ENCODE measurements at regions of chr13 and their contacts with region 1.

Region 1: GRCh38 chr13:99307648-99308339 is 595 bp upstream of the GPR183 start:
- DNase-seq: peak in 2 of 9 donors; percentile 44 to 69
- ATAC-seq: peak; percentile 40
- H3K4me3 ChIP-seq: peak overlapping the region; percentile 89
- H3K4me3 Mint-ChIP-seq: peak overlapping the region; percentile 89 to 100 (median 94)
- H3K27ac ChIP-seq: peak overlapping the region; percentile 88
- H3K27ac Mint-ChIP-seq: peak overlapping the region; percentile 81 to 99 (median 95)
- H3K4me1 ChIP-seq: peaks cover 49 to 50% of the 10 kb centered on the region in 2 donors
- H3K4me1 Mint-ChIP-seq: peaks cover 56 to 84% (median 77%) of the 10 kb centered on the region in 7 donors
- H3K27me3 ChIP-seq: no peaks in the 10 kb centered on the region
- H3K27me3 Mint-ChIP-seq: no peaks in the 10 kb centered on the region

Region 2: GRCh38 chr13:99281811-99282263 is 26.0 kb before region 1 on chr13:
- CTCF ChIA-PET with region 1: interaction called, 4 read pairs
- POLR2A ChIA-PET with region 1: interaction called, 208 read pairs
- intact Hi-C with region 1: loop called in 1 of 2 experiments (anchors 1 kb)
- DNase-seq: peak in 7 of 9 donors; percentile 45 to 65 (median 55)
- ATAC-seq: peak; percentile 85
- H3K4me3 ChIP-seq: peak overlapping the region; percentile 10
- H3K4me3 Mint-ChIP-seq: peak overlapping the region; percentile 36 to 85 (median 72)
- H3K27ac ChIP-seq: peak overlapping the region; percentile 73
- H3K27ac Mint-ChIP-seq: peak overlapping the region; percentile 86 to 99 (median 97)
- H3K4me1 ChIP-seq: peaks cover 83 to 87% of the 10 kb centered on the region in 2 donors
- H3K4me1 Mint-ChIP-seq: peaks cover 64 to 99% (median 94%) of the 10 kb centered on the region in 7 donors
- H3K27me3 ChIP-seq: no peaks in the 10 kb centered on the region
- H3K27me3 Mint-ChIP-seq: no peaks in the 10 kb centered on the region

Region 3: GRCh38 chr13:99296398-99296797 is 11.4 kb before region 1 on chr13:
- CTCF ChIA-PET with region 1: interaction called, 3 read pairs
- POLR2A ChIA-PET with region 1: interaction called, 39 read pairs
- intact Hi-C with region 1: loop called (anchors 1 kb)
- DNase-seq: peak in 6 of 9 donors; percentile 49 to 69 (median 57)
- ATAC-seq: peak; percentile 59
- H3K4me3 ChIP-seq: peak overlapping the region; percentile 28
- H3K4me3 Mint-ChIP-seq: peak overlapping the region; percentile 73 to 91 (median 82)
- H3K27ac ChIP-seq: peak overlapping the region; percentile 73
- H3K27ac Mint-ChIP-seq: peak overlapping the region; percentile 89 to 98 (median 93)
- H3K4me1 ChIP-seq: peaks cover 78 to 81% of the 10 kb centered on the region in 2 donors
- H3K4me1 Mint-ChIP-seq: peaks cover 60 to 94% (median 88%) of the 10 kb centered on the region in 7 donors
- H3K27me3 ChIP-seq: no peaks in the 10 kb centered on the region
- H3K27me3 Mint-ChIP-seq: no peaks in the 10 kb centered on the region

Region 4: GRCh38 chr13:99331881-99332293 is 24.1 kb after region 1 on chr13:
- CTCF ChIA-PET with region 1: interaction called, 3 read pairs
- POLR2A ChIA-PET with region 1: interaction called, 14 read pairs
- intact Hi-C with region 1: loop called in 1 of 2 experiments (anchors 5 kb)
- DNase-seq: no peak
- ATAC-seq: no peak
- H3K4me3 ChIP-seq: no peak overlapping the region
- H3K4me3 Mint-ChIP-seq: no peak overlapping the region
- H3K27ac ChIP-seq: no peak overlapping the region
- H3K27ac Mint-ChIP-seq: peak overlapping the region in 2 of 9 donors; percentile 28
- H3K4me1 ChIP-seq: peaks cover 4 to 11% of the 10 kb centered on the region in 2 donors
- H3K4me1 Mint-ChIP-seq: peaks cover 24 to 77% (median 73%) of the 10 kb centered on the region in 7 donors
- H3K27me3 ChIP-seq: no peaks in the 10 kb centered on the region
- H3K27me3 Mint-ChIP-seq: no peaks in the 10 kb centered on the region

Region 5: DNA sequence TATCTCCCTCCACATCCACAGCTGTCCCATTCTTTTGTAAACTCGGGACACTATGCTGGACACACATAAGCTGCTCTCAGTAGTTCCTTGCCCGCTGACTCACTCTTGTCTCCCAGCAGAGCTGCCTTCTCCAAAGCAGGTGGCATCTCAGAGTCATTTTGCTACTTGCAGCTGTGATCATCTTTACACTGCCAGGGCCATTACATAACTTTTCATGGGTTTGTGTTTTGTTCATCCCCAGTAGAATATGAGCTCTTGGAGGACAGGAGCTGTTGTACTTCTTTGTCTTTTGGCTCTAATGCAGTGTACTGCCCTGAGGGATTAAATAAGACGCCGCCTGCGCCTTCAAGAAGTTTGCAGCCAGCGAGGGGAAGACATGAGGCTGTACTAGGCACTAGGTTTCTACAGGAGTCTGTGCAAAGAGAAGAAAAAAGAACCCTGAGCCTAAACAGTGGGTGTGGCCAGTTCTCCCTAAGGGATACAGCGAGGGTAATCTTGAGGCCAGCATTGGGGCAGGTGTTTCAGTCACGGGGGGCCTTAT is 40.2 kb after region 1 on chr13:
- CTCF ChIA-PET with region 1: interaction called, 39 read pairs
- POLR2A ChIA-PET with region 1: interaction called, 205 read pairs
- intact Hi-C with region 1: loop called in 1 of 2 experiments (anchors 1 kb)
- DNase-seq: no peak
- ATAC-seq: no peak
- H3K4me3 ChIP-seq: no peak overlapping the region
- H3K4me3 Mint-ChIP-seq: peak overlapping the region in 2 of 10 donors; percentile 17 to 48
- H3K27ac ChIP-seq: peak overlapping the region; percentile 41
- H3K27ac Mint-ChIP-seq: peak overlapping the region; percentile 30 to 99 (median 96)
- H3K4me1 ChIP-seq: peaks cover 30 to 36% of the 10 kb centered on the region in 2 donors
- H3K4me1 Mint-ChIP-seq: peaks cover 42 to 98% (median 89%) of the 10 kb centered on the region in 7 donors
- H3K27me3 ChIP-seq: no peaks in the 10 kb centered on the region
- H3K27me3 Mint-ChIP-seq: no peaks in the 10 kb centered on the region

Region 6: DNA sequence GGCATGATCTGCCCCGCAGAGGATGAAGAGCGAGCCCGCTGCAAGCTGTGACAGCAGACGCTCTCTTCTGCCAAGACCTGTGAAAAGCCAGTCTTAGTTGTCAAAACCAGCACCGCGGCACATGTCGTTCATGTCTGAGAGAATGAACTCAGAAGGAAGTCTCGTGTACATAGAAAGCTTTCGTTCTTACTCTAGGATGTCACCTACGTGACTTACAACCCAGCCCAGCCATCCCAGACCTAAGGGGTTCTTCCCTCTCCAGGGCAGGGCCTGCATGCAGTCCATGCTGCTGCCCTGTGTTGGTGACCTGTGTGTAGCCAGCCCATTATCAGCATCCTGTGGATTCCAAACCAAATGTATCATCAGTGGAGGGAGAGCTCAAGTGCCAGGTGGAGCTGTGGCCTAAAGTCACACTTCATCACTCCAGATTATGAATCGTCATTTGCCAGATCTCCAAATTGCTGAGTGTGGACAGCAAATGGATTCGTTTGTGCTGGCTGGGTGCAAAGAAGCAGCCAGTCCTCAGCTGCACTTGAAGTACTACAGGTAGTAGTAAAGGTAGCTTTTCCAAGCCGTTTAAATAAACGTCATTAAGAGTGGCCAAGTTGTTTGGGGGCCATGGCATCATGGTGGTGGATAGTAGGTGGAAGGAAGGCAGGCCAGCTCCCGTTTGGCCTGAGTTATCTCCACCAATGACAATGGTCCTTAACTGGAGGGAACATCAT is 73.3 kb after region 1 on chr13:
- CTCF ChIA-PET with region 1: interaction called, 20 read pairs
- POLR2A ChIA-PET with region 1: interaction called, 364 read pairs
- intact Hi-C with region 1: loop called in 1 of 2 experiments (anchors 5 kb)
- DNase-seq: peak in 8 of 9 donors; percentile 55 to 73 (median 62)
- ATAC-seq: peak; percentile 51
- H3K4me3 ChIP-seq: peak overlapping the region; percentile 1
- H3K4me3 Mint-ChIP-seq: peak overlapping the region; percentile 63 to 85 (median 76)
- H3K27ac ChIP-seq: peak overlapping the region; percentile 85
- H3K27ac Mint-ChIP-seq: peak overlapping the region; percentile 94 to 99 (median 98)
- H3K4me1 ChIP-seq: peaks cover 77 to 88% of the 10 kb centered on the region in 2 donors
- H3K4me1 Mint-ChIP-seq: peaks cover 48 to 100% (median 98%) of the 10 kb centered on the region in 7 donors
- H3K27me3 ChIP-seq: no peaks in the 10 kb centered on the region
- H3K27me3 Mint-ChIP-seq: no peaks in the 10 kb centered on the region

Region 7: GRCh38 chr13:99417201-99418102 is 109.7 kb after region 1 on chr13:
- CTCF ChIA-PET with region 1: interaction called, 4 read pairs
- POLR2A ChIA-PET with region 1: interaction called, 15 read pairs
- intact Hi-C with region 1: no loop called
- DNase-seq: peak in 7 of 9 donors; percentile 58 to 78 (median 77)
- ATAC-seq: peak; percentile 40
- H3K4me3 ChIP-seq: peak overlapping the region; percentile 65
- H3K4me3 Mint-ChIP-seq: peak overlapping the region in 1 of 10 donors; percentile 50
- H3K27ac ChIP-seq: peak overlapping the region; percentile 91
- H3K27ac Mint-ChIP-seq: peak overlapping the region in 1 of 9 donors; percentile 26
- H3K4me1 ChIP-seq: peaks cover 18 to 78% of the 10 kb centered on the region in 2 donors
- H3K4me1 Mint-ChIP-seq: peaks cover 32 to 64% (median 49%) of the 10 kb centered on the region in 7 donors
- H3K27me3 ChIP-seq: no peaks in the 10 kb centered on the region
- H3K27me3 Mint-ChIP-seq: peaks cover 0 to 4% (median 0%) of the 10 kb centered on the region in 5 donors